ENCODE measurements at regions of chr5 and their contacts with region 1.

Region 1: DNA sequence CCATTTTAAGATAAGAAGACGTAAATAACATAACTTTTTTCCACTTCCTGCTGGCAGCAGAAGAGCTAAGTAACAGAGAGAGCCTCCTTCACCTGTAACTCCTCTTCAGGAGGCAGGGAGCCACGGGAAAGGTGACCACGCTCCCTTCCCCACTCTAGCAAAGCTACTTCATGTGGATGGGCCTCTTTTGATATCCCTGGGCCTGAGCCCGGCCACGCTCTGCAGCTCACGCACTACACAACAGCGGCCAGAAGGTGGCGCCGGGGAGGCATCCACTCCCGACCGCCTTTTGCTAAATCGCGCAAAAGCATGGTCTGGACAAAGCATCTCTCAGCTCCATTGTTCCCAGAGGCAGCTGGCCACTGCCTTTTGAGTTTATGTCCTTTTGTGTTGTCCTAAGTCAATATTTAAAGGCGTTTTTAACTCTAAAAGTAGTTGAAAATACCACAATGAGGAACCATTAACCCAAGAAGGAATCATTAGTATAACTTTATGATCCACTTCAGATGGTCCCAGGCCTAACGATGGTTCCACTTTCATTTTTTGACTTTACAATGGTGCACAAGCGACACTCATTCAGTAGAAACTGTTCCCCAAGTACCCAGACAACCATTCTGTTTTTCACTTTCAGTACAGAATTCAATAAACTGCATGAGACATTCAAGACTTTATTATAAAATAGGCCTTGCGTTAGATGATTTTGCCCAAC is 23.6 kb downstream of the CMBL start:
- H3K4me3 ChIP-seq: no peak overlapping the region
- H3K27ac ChIP-seq: no peak overlapping the region
- H3K4me1 ChIP-seq: peaks cover 11% of the 10 kb centered on the region
- CTCF ChIP-seq: peak; percentile 64; the same call in 1 of the 2 replicates

Region 2: GRCh38 chr5:10295619-10296326 is 11.7 kb after region 1 on chr5:
- CTCF ChIA-PET with region 1: interaction called, 13 read pairs
- POLR2A ChIA-PET with region 1: interaction called, 3 read pairs
- H3K4me3 ChIP-seq: no peak overlapping the region
- H3K27ac ChIP-seq: no peak overlapping the region
- H3K4me1 ChIP-seq: no peaks in the 10 kb centered on the region
- CTCF ChIP-seq: no peak

Region 3: DNA sequence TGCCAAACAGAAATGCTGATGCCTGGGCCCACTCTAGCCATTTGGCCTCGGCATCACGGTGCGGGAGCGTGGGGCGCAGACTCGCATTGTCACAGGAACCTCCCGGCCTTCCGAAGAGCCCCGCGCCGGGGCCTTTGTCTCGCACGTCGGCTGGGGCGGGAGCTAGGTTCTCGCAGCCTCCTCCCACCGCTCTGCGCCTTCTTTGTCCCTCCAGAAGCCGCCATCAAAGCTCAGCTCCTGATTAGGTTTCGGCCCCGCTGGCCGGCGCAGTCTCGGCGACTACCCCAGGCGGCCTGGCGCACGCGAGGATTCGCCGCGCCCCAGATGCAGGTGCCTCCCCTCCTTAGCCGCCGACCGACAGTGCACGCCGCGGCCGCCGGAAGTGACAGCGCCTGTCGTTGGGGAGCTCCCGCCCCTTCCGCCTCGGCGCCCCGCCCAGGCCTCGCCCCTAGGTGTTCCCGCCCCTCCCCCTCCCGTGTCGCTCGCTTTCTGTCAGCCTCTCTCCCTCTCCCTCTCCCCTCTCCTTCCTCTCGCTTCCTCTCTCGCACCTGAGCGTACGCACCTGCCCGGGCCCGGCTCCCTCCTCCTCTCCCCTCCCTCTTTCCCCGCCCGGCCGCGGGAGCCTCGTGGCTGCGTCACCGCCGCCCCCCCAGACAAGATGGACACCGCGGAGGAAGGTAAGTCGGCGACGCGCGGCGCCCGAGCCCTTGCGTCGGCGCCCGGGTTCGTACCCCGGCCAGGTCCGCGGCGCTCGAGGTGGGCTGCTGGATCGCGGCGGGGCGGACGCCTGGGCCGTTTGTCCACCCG is 69.4 kb after region 1 on chr5 and contains the start of gene MARCHF6:
- CTCF ChIA-PET with region 1: interaction called, 22 read pairs
- POLR2A ChIA-PET with region 1: interaction called, 21 read pairs
- H3K4me3 ChIP-seq: peak within 1 kb of the TSS; percentile 94
- H3K27ac ChIP-seq: peak within 1 kb of the TSS; percentile 99
- H3K4me1 ChIP-seq: peaks cover 18% of the 10 kb centered on the region
- CTCF ChIP-seq: no peak; the same call in 1 of the 2 replicates

Region 4: DNA sequence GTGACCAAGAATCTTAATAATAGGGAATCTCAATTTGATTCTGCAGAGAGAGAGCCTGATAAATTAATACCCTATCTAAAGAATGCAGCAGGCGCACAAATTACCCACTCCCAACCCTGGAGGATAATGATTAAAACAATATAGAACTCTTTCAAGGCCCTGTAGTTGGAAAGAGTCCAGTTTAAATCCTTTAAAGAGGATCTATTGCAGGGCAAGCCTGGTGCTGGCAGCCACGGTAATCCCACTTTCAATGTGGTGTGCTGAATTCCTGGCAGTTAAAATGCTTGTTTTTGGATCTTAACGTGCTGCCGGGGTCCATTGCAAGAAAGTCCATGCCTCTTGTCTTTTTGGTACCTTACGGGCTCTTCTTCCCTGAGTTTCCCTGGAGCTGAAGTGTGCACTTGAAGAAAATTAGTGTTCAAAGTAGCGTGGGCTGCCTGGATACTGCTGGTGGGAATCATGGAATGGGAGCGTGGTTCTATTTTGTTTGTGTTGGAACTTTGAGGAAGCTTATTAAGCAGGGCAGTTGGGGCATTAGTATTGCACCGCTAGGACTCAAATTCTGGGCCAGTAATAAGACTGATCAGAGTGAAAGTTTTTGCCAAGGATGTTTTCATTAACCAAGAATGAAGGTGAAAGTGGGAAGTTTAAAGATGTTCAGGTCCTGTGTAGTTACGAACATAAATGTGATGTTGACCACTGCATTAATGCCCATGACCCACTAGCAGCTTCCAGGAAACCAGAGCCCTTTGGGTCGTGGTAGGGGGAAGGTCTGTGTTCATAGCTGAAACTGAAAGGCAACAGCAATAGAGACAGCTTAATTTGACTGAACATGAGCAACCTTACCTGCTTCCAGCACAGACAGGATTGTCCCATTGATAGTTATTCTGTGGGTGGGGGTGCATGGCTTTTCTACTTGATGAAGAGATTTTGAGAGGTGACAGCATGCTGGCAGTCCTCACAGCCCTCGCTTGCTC is 90.3 kb after region 1 on chr5:
- CTCF ChIA-PET with region 1: interaction called, 10 read pairs
- POLR2A ChIA-PET with region 1: no interaction called
- H3K4me3 ChIP-seq: no peak overlapping the region
- H3K27ac ChIP-seq: no peak overlapping the region
- H3K4me1 ChIP-seq: no peaks in the 10 kb centered on the region
- CTCF ChIP-seq: no peak

Region 5: GRCh38 chr5:10424124-10424731 is 140.1 kb after region 1 on chr5:
- CTCF ChIA-PET with region 1: interaction called, 40 read pairs
- POLR2A ChIA-PET with region 1: no interaction called
- H3K4me3 ChIP-seq: no peak overlapping the region
- H3K27ac ChIP-seq: no peak overlapping the region
- H3K4me1 ChIP-seq: no peaks in the 10 kb centered on the region
- CTCF ChIP-seq: no peak; the same call in 1 of the 2 replicates